PC-3 (cell line): ENCODE measurements at regions of chr2 and their contacts with region 1.

Region 1: DNA sequence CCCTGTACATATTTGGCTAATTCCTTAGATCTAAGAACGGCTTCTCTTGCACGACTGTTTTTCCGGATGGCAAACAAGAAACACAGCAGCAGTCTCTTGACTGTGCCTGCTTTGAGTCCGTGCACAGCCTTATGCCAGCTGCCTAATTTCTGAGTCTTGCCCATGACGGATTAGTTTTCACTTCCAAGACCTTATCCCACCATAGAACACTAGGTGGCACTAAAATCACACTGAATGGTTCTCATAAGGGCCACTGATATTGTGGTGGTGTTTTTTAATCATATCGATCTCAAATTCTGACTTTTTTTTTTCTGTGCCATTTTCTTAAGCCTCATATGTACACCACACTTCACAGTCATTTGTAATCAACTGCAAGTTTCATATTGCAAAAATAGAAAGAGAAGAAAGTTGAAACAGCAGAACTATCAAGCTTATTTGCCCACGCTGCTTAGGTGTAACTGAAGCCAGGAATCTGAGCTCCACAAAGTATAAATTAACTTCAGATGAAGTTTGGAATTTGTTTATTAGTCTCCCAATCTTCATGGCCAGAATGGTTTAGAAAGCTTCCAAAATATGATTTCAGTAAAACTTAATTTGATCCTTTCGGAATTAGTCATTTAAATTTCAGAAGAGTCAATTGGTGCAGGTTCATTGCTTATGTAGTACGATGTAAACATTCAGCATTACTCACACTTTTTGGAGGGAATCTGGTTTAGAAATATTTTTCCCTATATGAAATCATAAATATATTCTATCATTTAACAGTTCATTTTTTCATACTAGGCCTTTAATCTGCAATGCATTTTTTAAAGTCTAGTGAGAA is 45.5 kb upstream of the SCN7A start:
- DNase-seq: peak; percentile 95
- ATAC-seq: peak; percentile 98
- H3K4me3 ChIP-seq: peak overlapping the region; percentile 43
- H3K27ac ChIP-seq: no peak overlapping the region
- H3K4me1 ChIP-seq: peaks cover 8% of the 10 kb centered on the region; the same call in 1 of the 2 replicates
- H3K27me3 ChIP-seq: peaks cover 20% of the 10 kb centered on the region; the same call in 1 of the 2 replicates
- CTCF ChIP-seq: peak; percentile 99

Region 2: GRCh38 chr2:165698444-165698894 is 841.1 kb before region 1 on chr2:
- CTCF ChIA-PET with region 1: no interaction called
- POLR2A ChIA-PET with region 1: no interaction called
- intact Hi-C with region 1: loop called (anchors 2 kb)
- DNase-seq: peak; percentile 80
- ATAC-seq: peak; percentile 96
- H3K4me3 ChIP-seq: no peak overlapping the region
- H3K27ac ChIP-seq: no peak overlapping the region
- H3K4me1 ChIP-seq: no peaks in the 10 kb centered on the region
- H3K27me3 ChIP-seq: 0 out of 2 replicates have a peak, but pooled peaks cover 3% of the 10 kb centered on the region
- CTCF ChIP-seq: peak; percentile 79

Region 3: GRCh38 chr2:166550923-166551322 is 11.4 kb after region 1 on chr2:
- CTCF ChIA-PET with region 1: no interaction called
- POLR2A ChIA-PET with region 1: no interaction called
- intact Hi-C with region 1: no loop called
- DNase-seq: no peak
- ATAC-seq: no peak
- H3K4me3 ChIP-seq: no peak overlapping the region
- H3K27ac ChIP-seq: no peak overlapping the region
- H3K4me1 ChIP-seq: no peaks in the 10 kb centered on the region
- H3K27me3 ChIP-seq: no peaks in the 10 kb centered on the region
- CTCF ChIP-seq: no peak

Region 4: GRCh38 chr2:166610180-166610912 is 70.8 kb after region 1 on chr2:
- CTCF ChIA-PET with region 1: interaction called, 4 read pairs
- POLR2A ChIA-PET with region 1: interaction called, 3 read pairs
- intact Hi-C with region 1: loop called (anchors 1 kb)
- DNase-seq: no peak
- ATAC-seq: no peak
- H3K4me3 ChIP-seq: no peak overlapping the region
- H3K27ac ChIP-seq: no peak overlapping the region
- H3K4me1 ChIP-seq: no peaks in the 10 kb centered on the region
- H3K27me3 ChIP-seq: no peaks in the 10 kb centered on the region
- CTCF ChIP-seq: no peak

Region 5: GRCh38 chr2:166700079-166700478 is 160.5 kb after region 1 on chr2:
- CTCF ChIA-PET with region 1: interaction called, 6 read pairs
- POLR2A ChIA-PET with region 1: no interaction called
- intact Hi-C with region 1: loop called (anchors 1 kb)
- DNase-seq: peak; percentile 47
- ATAC-seq: peak; percentile 67
- H3K4me3 ChIP-seq: no peak overlapping the region
- H3K27ac ChIP-seq: no peak overlapping the region
- H3K4me1 ChIP-seq: no peaks in the 10 kb centered on the region
- H3K27me3 ChIP-seq: 0 out of 2 replicates have a peak, but pooled peaks cover 3% of the 10 kb centered on the region
- CTCF ChIP-seq: peak; percentile 69

Region 6: GRCh38 chr2:167127135-167127534 is 587.6 kb after region 1 on chr2:
- CTCF ChIA-PET with region 1: no interaction called
- POLR2A ChIA-PET with region 1: no interaction called
- intact Hi-C with region 1: loop called (anchors 5 kb)
- DNase-seq: peak; percentile 70
- ATAC-seq: peak; percentile 95
- H3K4me3 ChIP-seq: no peak overlapping the region
- H3K27ac ChIP-seq: no peak overlapping the region
- H3K4me1 ChIP-seq: peaks cover 3% of the 10 kb centered on the region; the same call in 1 of the 2 replicates
- H3K27me3 ChIP-seq: no peaks in the 10 kb centered on the region
- CTCF ChIP-seq: peak; percentile 68

Region 7: GRCh38 chr2:167411367-167411766 is 871.8 kb after region 1 on chr2:
- CTCF ChIA-PET with region 1: no interaction called
- POLR2A ChIA-PET with region 1: no interaction called
- intact Hi-C with region 1: loop called (anchors 1 kb)
- DNase-seq: peak; percentile 40
- ATAC-seq: peak; percentile 50; the same call in 1 of the 2 replicates
- H3K4me3 ChIP-seq: no peak overlapping the region
- H3K27ac ChIP-seq: no peak overlapping the region
- H3K4me1 ChIP-seq: no peaks in the 10 kb centered on the region
- H3K27me3 ChIP-seq: no peaks in the 10 kb centered on the region
- CTCF ChIP-seq: peak; percentile 55